K562 (cell line): ENCODE measurements at regions of chr4 and their contacts with region 1.

Region 1: DNA sequence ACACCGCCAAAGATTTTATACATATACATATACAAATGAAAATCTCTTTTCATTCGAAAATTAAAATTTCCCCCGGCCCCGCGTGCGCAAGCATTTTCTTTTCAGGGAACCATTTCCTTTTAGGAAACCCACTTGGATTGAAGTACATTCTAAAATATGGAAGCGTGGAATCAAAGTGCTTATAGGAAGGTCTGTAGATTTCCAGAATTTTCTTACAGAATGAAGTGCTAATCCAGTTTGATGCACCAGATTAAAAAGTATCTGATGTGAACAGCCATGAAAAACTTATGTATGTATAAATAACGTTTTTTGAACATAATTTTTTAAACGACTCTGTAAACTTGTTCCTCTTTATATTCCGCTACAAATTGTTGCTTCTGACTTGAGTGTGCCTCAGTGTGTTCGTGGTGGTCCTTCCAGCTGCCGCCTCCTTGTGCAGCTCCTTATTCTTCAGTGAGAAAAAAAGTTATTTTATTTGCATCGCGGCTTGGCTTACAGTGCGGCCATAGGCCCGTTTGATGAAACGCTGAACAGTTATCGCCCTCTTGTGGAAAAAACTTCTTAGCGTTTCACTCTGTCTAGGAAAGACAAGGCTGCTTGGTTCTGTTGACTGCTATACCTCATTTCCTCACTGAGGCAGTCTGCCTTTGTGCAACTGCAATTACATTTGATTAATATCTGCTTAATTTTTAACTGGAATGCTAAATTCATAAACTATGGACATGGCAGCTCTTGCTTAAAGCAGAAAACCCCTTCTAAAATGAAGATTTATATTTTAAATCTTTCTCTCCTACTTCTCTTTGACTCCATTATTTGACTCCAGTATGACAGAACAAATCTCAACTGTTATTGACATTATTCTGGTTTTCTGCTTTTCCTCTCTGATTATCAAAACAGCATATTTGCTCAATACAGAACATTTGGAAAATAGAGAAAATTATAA is 4.7 kb upstream of the NKX6-1 start:
- DNase-seq: peak; percentile 52 to 68 (median 62)
- ATAC-seq: peak; percentile 99
- H3K4me3 ChIP-seq: no peak overlapping the region
- H3K27ac ChIP-seq: no peak overlapping the region
- H3K4me1 ChIP-seq: peaks cover 0 to 7% of the 10 kb centered on the region in 2 experiments; a peak in 2 of 5 replicates
- H3K27me3 ChIP-seq: peaks cover 30 to 32% of the 10 kb centered on the region in 2 experiments
- CTCF ChIP-seq: peak; percentile 65 to 76 (median 72)
- EP300 ChIP-seq: no peak
- POLR2A ChIP-seq: no peak
- RAD21 ChIP-seq: peak; percentile 64 to 78

Region 2: GRCh38 chr4:83503974-83504373 is 999.8 kb before region 1 on chr4:
- CTCF ChIA-PET with region 1: no interaction called
- POLR2A ChIA-PET with region 1: no interaction called
- in situ Hi-C with region 1: loop called (anchors 25 kb)
- intact Hi-C with region 1: loop called (anchors 10 kb)
- DNase-seq: no peak
- ATAC-seq: no peak
- H3K4me3 ChIP-seq: no peak overlapping the region
- H3K27ac ChIP-seq: no peak overlapping the region
- H3K4me1 ChIP-seq: no peaks in the 10 kb centered on the region; a peak in 2 of 5 replicates
- H3K27me3 ChIP-seq: no peaks in the 10 kb centered on the region
- CTCF ChIP-seq: no peak
- EP300 ChIP-seq: no peak
- POLR2A ChIP-seq: no peak
- RAD21 ChIP-seq: no peak

Region 3: GRCh38 chr4:83516042-83516772 is 987.6 kb before region 1 on chr4:
- CTCF ChIA-PET with region 1: no interaction called
- POLR2A ChIA-PET with region 1: no interaction called
- in situ Hi-C with region 1: loop called (anchors 25 kb)
- intact Hi-C with region 1: no loop called
- DNase-seq: no peak
- ATAC-seq: no peak
- H3K4me3 ChIP-seq: no peak overlapping the region
- H3K27ac ChIP-seq: no peak overlapping the region
- H3K4me1 ChIP-seq: no peaks in the 10 kb centered on the region
- H3K27me3 ChIP-seq: no peaks in the 10 kb centered on the region
- CTCF ChIP-seq: no peak
- EP300 ChIP-seq: no peak
- POLR2A ChIP-seq: no peak
- RAD21 ChIP-seq: no peak

Region 4: GRCh38 chr4:83646538-83647239 is 857.1 kb before region 1 on chr4:
- CTCF ChIA-PET with region 1: interaction called, 7 read pairs
- POLR2A ChIA-PET with region 1: no interaction called
- in situ Hi-C with region 1: loop called (anchors 10 kb)
- intact Hi-C with region 1: loop called (anchors 2 kb)
- DNase-seq: no peak
- ATAC-seq: no peak
- H3K4me3 ChIP-seq: no peak overlapping the region
- H3K27ac ChIP-seq: no peak overlapping the region
- H3K4me1 ChIP-seq: no peaks in the 10 kb centered on the region
- H3K27me3 ChIP-seq: no peaks in the 10 kb centered on the region; a peak in 1 of 5 replicates
- CTCF ChIP-seq: no peak
- EP300 ChIP-seq: no peak
- POLR2A ChIP-seq: no peak
- RAD21 ChIP-seq: no peak

Region 5: DNA sequence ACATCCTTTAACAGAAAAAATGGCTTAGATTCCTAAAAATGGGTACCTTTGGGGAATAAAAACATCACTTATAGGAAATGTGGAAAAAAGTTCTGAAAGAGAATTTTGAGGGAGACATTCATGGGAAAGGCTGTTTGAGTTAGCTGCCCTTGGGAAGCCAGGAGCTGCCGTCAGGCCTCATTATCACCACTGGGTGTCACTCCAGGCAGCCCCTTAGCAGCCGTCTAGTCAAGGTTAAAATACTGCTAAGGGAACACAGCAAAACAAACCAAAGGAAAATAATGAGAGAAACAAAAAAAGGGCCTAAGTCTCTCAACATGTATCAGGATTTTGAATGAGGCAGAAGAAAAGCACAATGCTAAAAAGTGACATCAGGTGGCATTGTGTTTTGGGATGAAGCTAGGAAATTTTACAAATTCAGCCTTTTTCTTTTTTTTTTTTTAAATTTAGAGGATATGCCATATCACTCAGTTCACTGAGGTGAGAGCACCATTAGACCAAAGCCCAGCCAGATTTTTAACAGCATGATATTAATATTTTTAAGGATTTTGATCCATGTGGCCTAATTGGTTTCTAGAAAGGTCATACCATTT is 732.6 kb before region 1 on chr4:
- CTCF ChIA-PET with region 1: interaction called, 6 read pairs
- POLR2A ChIA-PET with region 1: no interaction called
- in situ Hi-C with region 1: no loop called
- intact Hi-C with region 1: loop called (anchors 1 kb)
- DNase-seq: peak; percentile 25 to 50 (median 38)
- ATAC-seq: peak; percentile 91
- H3K4me3 ChIP-seq: no peak overlapping the region
- H3K27ac ChIP-seq: no peak overlapping the region
- H3K4me1 ChIP-seq: no peaks in the 10 kb centered on the region
- H3K27me3 ChIP-seq: no peaks in the 10 kb centered on the region
- CTCF ChIP-seq: peak; percentile 48 to 69 (median 68)
- EP300 ChIP-seq: no peak
- POLR2A ChIP-seq: no peak
- RAD21 ChIP-seq: peak; percentile 71 to 73

Region 6: GRCh38 chr4:83905952-83906351 is 597.8 kb before region 1 on chr4:
- CTCF ChIA-PET with region 1: interaction called, 3 read pairs
- POLR2A ChIA-PET with region 1: no interaction called
- in situ Hi-C with region 1: no loop called
- intact Hi-C with region 1: loop called (anchors 10 kb)
- DNase-seq: peak in 1 of 4 experiments; percentile 26
- ATAC-seq: peak; percentile 73
- H3K4me3 ChIP-seq: no peak overlapping the region
- H3K27ac ChIP-seq: no peak overlapping the region
- H3K4me1 ChIP-seq: no peaks in the 10 kb centered on the region
- H3K27me3 ChIP-seq: no peaks in the 10 kb centered on the region
- CTCF ChIP-seq: peak; percentile 46 to 57 (median 51); a peak in 4 of 6 replicates
- EP300 ChIP-seq: no peak
- POLR2A ChIP-seq: no peak
- RAD21 ChIP-seq: peak; percentile 67 to 68

Region 7: GRCh38 chr4:84159762-84160161 is 344.0 kb before region 1 on chr4:
- CTCF ChIA-PET with region 1: no interaction called
- POLR2A ChIA-PET with region 1: no interaction called
- in situ Hi-C with region 1: no loop called
- intact Hi-C with region 1: loop called (anchors 10 kb)
- DNase-seq: peak in 2 of 4 experiments; percentile 9 to 11
- ATAC-seq: peak; percentile 83
- H3K4me3 ChIP-seq: no peak overlapping the region
- H3K27ac ChIP-seq: no peak overlapping the region
- H3K4me1 ChIP-seq: no peaks in the 10 kb centered on the region
- H3K27me3 ChIP-seq: peaks cover 3 to 4% of the 10 kb centered on the region in 2 experiments; a peak in 3 of 5 replicates
- CTCF ChIP-seq: peak; percentile 31 to 42 (median 32); a peak in 3 of 6 replicates
- EP300 ChIP-seq: no peak
- POLR2A ChIP-seq: no peak
- RAD21 ChIP-seq: peak; percentile 43 to 46; a peak in 3 of 4 replicates

Region 8: DNA sequence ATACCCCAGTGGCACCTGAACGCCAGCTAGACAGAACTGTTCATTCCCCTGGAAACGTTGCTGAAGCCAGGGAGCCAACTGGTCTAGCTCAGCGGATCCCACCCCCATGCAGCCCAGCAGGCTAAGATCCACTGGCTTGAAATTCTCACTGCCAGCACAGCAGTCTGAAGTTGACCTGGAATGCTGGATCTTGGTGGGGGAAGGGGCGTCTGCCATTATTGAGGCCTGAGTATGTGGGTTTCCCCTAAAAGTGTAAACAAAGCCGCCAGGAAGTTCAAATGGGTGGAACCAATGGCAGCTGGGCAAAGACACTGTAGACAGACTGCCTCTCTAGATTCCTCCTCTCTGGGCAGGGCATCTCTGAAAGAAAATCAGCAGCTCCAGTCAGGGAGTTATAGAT is 217.7 kb before region 1 on chr4:
- CTCF ChIA-PET with region 1: no interaction called
- POLR2A ChIA-PET with region 1: no interaction called
- in situ Hi-C with region 1: no loop called
- intact Hi-C with region 1: no loop called
- DNase-seq: no peak
- ATAC-seq: no peak
- H3K4me3 ChIP-seq: no peak overlapping the region
- H3K27ac ChIP-seq: no peak overlapping the region
- H3K4me1 ChIP-seq: no peaks in the 10 kb centered on the region
- H3K27me3 ChIP-seq: no peaks in the 10 kb centered on the region
- CTCF ChIP-seq: no peak
- EP300 ChIP-seq: no peak
- POLR2A ChIP-seq: no peak
- RAD21 ChIP-seq: no peak

Region 9: GRCh38 chr4:84796394-84796793 is 292.6 kb after region 1 on chr4:
- CTCF ChIA-PET with region 1: no interaction called
- POLR2A ChIA-PET with region 1: no interaction called
- in situ Hi-C with region 1: no loop called
- intact Hi-C with region 1: no loop called
- DNase-seq: peak; percentile 5 to 35 (median 24)
- ATAC-seq: no peak
- H3K4me3 ChIP-seq: no peak overlapping the region
- H3K27ac ChIP-seq: no peak overlapping the region
- H3K4me1 ChIP-seq: no peaks in the 10 kb centered on the region
- H3K27me3 ChIP-seq: no peaks in the 10 kb centered on the region
- CTCF ChIP-seq: no peak
- EP300 ChIP-seq: no peak
- POLR2A ChIP-seq: no peak
- RAD21 ChIP-seq: no peak